Naive thymus-derived CD4-positive, alpha-beta T cell (primary cell): ENCODE measurements at regions of chr9 and their contacts with region 1.

Region 1: GRCh38 chr9:97954550-97954989 is 16.6 kb upstream of the HEMGN start:
- DNase-seq: peak in 8 of 9 donors; percentile 34 to 69 (median 60)
- ATAC-seq: peak; percentile 90
- H3K4me3 ChIP-seq: no peak overlapping the region
- H3K4me3 Mint-ChIP-seq: no peak overlapping the region
- H3K27ac ChIP-seq: no peak overlapping the region
- H3K27ac Mint-ChIP-seq: peak overlapping the region in 4 of 9 donors; percentile 14 to 78 (median 44)
- H3K4me1 ChIP-seq: peaks cover 0 to 10% of the 10 kb centered on the region in 2 donors
- H3K4me1 Mint-ChIP-seq: peaks cover 0 to 13% (median 9%) of the 10 kb centered on the region in 7 donors
- H3K27me3 ChIP-seq: no peaks in the 10 kb centered on the region
- H3K27me3 Mint-ChIP-seq: peaks cover 0 to 18% (median 0%) of the 10 kb centered on the region in 5 donors

Region 2: DNA sequence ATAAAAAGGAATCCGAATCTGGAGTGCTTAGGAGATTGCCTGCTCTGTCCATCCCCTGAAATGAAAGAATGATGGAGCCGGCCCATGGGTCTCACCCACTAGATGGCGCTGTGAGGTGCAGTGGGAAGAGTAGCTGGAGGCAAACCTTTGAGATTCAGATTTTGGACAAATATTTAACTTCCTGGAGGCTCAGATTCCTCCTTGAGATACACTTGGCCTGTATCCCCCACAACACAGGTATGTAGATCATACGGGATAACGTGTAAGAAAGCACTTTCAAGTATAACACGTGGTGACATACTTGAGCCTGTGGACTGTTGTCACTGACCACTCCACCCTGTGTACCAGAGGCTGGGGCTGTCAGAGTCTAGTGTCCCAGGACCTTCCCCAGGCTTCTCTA is 64.5 kb before region 1 on chr9:
- CTCF ChIA-PET with region 1: interaction called, 3 read pairs
- POLR2A ChIA-PET with region 1: interaction called, 4 read pairs
- intact Hi-C with region 1: loop called (anchors 1 to 2 kb)
- DNase-seq: peak; percentile 40 to 73 (median 57)
- ATAC-seq: peak; percentile 88
- H3K4me3 ChIP-seq: no peak overlapping the region
- H3K4me3 Mint-ChIP-seq: peak overlapping the region in 1 of 10 donors; percentile 51
- H3K27ac ChIP-seq: no peak overlapping the region
- H3K27ac Mint-ChIP-seq: peak overlapping the region in 5 of 9 donors; percentile 28 to 81 (median 68)
- H3K4me1 ChIP-seq: peaks cover 0 to 4% of the 10 kb centered on the region in 2 donors
- H3K4me1 Mint-ChIP-seq: peaks cover 6 to 23% (median 18%) of the 10 kb centered on the region in 7 donors
- H3K27me3 ChIP-seq: no peaks in the 10 kb centered on the region
- H3K27me3 Mint-ChIP-seq: no peaks in the 10 kb centered on the region

Region 3: DNA sequence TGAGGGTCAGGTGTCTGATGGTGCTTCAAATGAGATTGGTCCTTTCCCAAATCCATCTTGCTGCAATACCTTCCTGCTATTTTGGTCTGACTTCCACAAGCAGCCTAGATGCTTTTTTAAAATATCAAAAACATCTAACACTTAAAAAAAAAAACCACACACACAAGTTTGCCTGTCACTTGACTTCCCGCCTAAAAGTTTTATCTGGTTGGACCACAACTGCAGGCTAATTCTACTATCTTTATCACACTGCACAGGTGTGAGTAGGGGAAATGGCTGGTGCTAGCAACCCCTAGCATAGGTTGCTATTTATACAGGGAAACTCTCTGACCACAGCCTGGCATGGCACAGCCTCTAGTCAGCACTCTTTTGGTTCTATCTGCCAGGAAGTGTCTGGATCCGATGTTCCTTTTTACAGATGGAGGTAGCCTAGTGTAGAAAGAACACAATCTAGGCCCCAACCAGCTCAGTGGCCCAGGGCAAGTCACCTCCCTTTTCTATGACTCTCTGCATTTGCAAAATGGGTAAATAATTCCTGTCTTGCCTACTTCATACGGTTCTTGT is 16.4 kb before region 1 on chr9 and contains the start of gene HEMGN:
- CTCF ChIA-PET with region 1: interaction called, 11 read pairs
- POLR2A ChIA-PET with region 1: interaction called, 3 read pairs
- intact Hi-C with region 1: loop called in 1 of 2 experiments (anchors 1 kb)
- DNase-seq: peak in 7 of 9 donors; percentile 38 to 74 (median 67)
- ATAC-seq: peak; percentile 97
- H3K4me3 ChIP-seq: peak within 1 kb of the TSS; percentile 10
- H3K4me3 Mint-ChIP-seq: peak within 1 kb of the TSS; percentile 40 to 81 (median 62)
- H3K27ac ChIP-seq: peak within 1 kb of the TSS; percentile 67
- H3K27ac Mint-ChIP-seq: peak within 1 kb of the TSS; percentile 82 to 94 (median 90)
- H3K4me1 ChIP-seq: peaks cover 18 to 48% of the 10 kb centered on the region in 2 donors
- H3K4me1 Mint-ChIP-seq: peaks cover 18 to 63% (median 58%) of the 10 kb centered on the region in 7 donors
- H3K27me3 ChIP-seq: no peaks in the 10 kb centered on the region
- H3K27me3 Mint-ChIP-seq: peaks cover 0 to 13% (median 0%) of the 10 kb centered on the region in 5 donors
- total RNA-seq, gene HEMGN: 1.3 to 4.3 (median 2.3) TPM

Region 4: GRCh38 chr9:98034593-98035546 is 80.3 kb after region 1 on chr9:
- CTCF ChIA-PET with region 1: interaction called, 12 read pairs
- POLR2A ChIA-PET with region 1: interaction called, 3 read pairs
- intact Hi-C with region 1: loop called in 1 of 2 experiments (anchors 1 kb)
- DNase-seq: peak; percentile 76 to 92 (median 86)
- ATAC-seq: peak; percentile 99
- H3K4me3 ChIP-seq: no peak overlapping the region
- H3K4me3 Mint-ChIP-seq: peak overlapping the region in 8 of 10 donors; percentile 11 to 63 (median 41)
- H3K27ac ChIP-seq: no peak overlapping the region
- H3K27ac Mint-ChIP-seq: peak overlapping the region in 8 of 9 donors; percentile 9 to 87 (median 66)
- H3K4me1 ChIP-seq: peaks cover 0 to 4% of the 10 kb centered on the region in 2 donors
- H3K4me1 Mint-ChIP-seq: peaks cover 5 to 12% (median 8%) of the 10 kb centered on the region in 7 donors
- H3K27me3 ChIP-seq: no peaks in the 10 kb centered on the region
- H3K27me3 Mint-ChIP-seq: peaks cover 0 to 8% (median 0%) of the 10 kb centered on the region in 5 donors

Region 5: DNA sequence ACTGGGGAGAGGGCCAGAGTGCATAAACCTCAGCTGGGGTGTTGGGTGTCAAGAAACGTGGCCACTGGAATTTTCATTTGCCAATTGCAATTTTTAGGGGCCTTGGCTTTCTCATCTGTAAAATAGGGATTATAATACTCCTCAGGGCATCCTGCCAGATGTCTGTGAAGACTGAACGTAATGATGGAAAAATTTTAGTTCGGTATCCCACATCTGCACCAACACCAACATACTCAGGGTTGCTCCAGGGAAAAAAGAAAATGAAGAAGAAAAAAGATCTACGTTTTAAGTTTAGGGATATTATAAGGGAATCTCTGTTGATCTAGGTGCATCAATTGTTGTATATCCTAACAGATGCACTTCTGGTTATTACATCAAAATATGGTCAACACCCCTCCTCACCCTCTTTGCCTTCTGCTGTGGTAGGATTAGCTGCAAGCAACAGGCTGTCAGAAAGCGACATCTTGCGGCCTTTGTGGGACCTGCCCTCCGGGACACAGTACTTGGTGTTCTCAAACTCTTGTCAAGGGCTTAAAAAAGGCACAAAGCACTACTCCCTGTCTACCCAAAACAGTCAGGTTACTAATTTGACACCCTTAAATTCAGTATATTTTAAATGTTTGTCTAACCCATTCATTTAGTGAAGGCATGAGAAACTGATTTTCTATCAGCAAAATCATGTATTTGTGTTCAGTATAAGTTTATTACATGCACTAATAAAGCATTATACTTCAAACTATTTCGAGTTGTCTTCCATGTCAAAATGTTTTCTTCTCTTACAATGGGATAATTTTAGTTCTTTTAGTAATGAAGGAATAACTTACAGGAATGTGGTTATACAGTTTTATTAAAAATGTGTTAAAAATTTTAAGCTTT is 309.1 kb after region 1 on chr9:
- CTCF ChIA-PET with region 1: no interaction called
- POLR2A ChIA-PET with region 1: no interaction called
- intact Hi-C with region 1: loop called in 1 of 2 experiments (anchors 1 kb)
- DNase-seq: peak; percentile 54 to 82 (median 77)
- ATAC-seq: peak; percentile 100
- H3K4me3 ChIP-seq: no peak overlapping the region
- H3K4me3 Mint-ChIP-seq: no peak overlapping the region
- H3K27ac ChIP-seq: no peak overlapping the region
- H3K27ac Mint-ChIP-seq: peak overlapping the region in 1 of 9 donors; percentile 59
- H3K4me1 ChIP-seq: no peaks in the 10 kb centered on the region
- H3K4me1 Mint-ChIP-seq: peaks cover 0 to 3% (median 0%) of the 10 kb centered on the region in 7 donors
- H3K27me3 ChIP-seq: no peaks in the 10 kb centered on the region
- H3K27me3 Mint-ChIP-seq: peaks cover 0 to 23% (median 0%) of the 10 kb centered on the region in 5 donors